ENCODE measurements at regions of chr10 and their contacts with region 1.

Region 1: DNA sequence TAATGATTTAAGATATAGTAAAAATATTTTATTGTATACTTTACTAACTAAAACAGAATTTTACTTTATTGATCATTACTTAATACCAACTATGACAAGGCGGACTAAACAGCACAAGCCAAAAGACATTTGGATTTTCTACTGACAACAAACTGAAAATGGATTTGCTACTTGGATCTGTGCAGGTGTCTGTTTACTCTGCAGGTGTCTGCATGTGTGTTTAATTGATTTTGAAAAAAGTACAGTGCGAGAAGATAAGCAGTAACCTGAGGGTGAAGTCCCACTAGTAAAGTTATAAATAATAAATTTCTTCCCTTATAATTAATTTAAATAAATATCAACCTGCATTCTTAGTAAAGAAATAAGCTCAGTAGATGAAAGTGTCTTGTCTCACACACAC is 696.8 kb upstream of the MBL2 start:
- DNase-seq: no peak
- H3K4me3 ChIP-seq: no peak overlapping the region
- H3K27ac ChIP-seq: no peak overlapping the region
- H3K4me1 ChIP-seq: no peaks in the 10 kb centered on the region
- H3K27me3 ChIP-seq: no peaks in the 10 kb centered on the region
- CTCF ChIP-seq: no peak

Region 2: GRCh38 chr10:53537508-53537907 is 68.1 kb after region 1 on chr10:
- CTCF ChIA-PET with region 1: no interaction called
- POLR2A ChIA-PET with region 1: no interaction called
- intact Hi-C with region 1: no loop called
- DNase-seq: no peak
- H3K4me3 ChIP-seq: no peak overlapping the region
- H3K27ac ChIP-seq: no peak overlapping the region
- H3K4me1 ChIP-seq: no peaks in the 10 kb centered on the region
- H3K27me3 ChIP-seq: no peaks in the 10 kb centered on the region
- CTCF ChIP-seq: no peak

Region 3: DNA sequence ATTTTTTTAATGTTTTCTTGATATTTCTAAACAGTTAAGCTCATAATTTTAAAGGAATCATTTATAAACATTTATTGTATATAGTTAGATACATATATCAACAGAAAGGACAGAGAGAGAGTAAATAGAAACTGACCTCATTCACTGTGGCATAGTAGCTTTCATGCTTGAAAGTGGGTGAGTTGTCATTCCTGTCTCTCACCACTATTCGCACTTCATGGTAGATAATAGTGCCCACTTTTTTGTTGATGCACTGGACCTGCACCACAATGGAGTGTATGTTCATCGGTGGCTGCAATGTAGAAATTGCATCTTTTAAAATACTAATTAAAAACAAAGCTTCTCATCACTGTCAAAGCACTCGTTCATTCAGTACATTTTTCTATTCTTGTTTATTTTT is 899.6 kb after region 1 on chr10:
- CTCF ChIA-PET with region 1: no interaction called
- POLR2A ChIA-PET with region 1: interaction called, 15 read pairs
- intact Hi-C with region 1: no loop called
- DNase-seq: no peak
- H3K4me3 ChIP-seq: no peak overlapping the region
- H3K27ac ChIP-seq: no peak overlapping the region
- H3K4me1 ChIP-seq: no peaks in the 10 kb centered on the region
- H3K27me3 ChIP-seq: no peaks in the 10 kb centered on the region
- CTCF ChIP-seq: no peak